ENCODE measurements at regions of chr5 and their contacts with region 1.

Region 1: DNA sequence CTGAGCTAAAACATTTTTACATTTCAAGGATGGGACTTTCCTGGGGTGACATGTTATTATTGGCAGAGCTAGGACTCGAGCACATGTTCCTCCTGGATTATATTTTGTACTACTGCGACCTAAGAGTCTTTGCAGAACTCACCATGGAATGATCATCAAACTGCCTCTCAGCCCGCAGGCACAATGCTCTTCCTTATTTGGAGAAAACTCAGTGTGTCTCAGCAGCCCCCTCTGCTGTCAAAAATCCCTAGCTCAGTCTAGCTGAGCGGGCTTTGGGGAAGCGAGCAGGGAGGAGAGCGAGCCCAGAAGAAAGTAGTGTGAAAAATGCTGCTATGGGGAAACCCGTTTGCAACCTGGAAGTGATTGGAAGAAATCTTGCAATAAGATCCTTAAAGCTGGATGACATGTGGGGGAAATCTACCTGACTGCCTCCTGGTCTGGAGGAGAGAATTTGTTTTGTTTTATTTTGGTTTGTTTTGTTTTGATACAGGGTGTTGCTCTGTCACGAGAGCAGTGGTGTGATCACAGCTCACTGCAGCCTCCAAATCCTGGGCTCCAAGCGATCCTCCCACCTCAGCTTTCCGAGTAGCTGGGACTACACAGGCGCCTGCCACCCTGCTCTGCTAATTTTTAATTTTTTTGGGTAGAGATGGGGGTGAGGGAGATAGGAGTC is 89.9 kb upstream of the CLINT1 start:
- DNase-seq: peak; percentile 60
- ATAC-seq: peak; percentile 100
- H3K4me3 Mint-ChIP-seq: no peak overlapping the region
- H3K27ac Mint-ChIP-seq: no peak overlapping the region
- H3K4me1 Mint-ChIP-seq: peaks cover 6% of the 10 kb centered on the region
- H3K27me3 Mint-ChIP-seq: peaks cover 5% of the 10 kb centered on the region
- CTCF ChIP-seq: no peak

Region 2: DNA sequence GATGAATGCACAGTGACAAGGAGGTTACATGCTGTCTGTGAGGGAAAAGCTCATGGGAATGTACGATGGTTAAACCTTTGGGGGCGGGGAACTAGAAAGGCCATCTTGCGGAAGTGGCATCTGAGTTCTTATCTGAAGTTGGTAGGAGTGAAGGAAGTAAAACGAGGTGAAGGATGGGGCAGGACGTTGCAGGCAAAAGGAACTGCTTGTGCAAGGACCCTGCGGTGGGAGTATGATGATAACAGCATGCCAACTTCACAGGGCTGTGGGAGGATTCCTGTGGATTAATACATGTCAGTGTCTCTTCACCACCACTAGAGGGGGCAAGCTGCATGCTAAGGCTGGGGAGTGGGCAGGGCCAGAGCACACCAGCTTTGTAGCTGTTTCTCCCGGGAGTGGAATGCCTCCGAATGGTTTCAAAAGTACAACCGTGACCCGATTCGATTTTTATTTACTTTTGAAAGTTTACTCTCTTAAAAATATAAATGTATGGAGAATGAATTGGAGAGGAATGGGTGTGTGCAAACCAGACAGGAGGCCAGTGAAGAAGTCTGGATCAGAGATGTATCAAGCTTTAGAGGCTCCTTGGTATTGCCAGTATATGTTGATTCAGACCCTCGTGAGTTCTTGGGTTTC is 620.5 kb before region 1 on chr5:
- CTCF ChIA-PET with region 1: no interaction called
- POLR2A ChIA-PET with region 1: no interaction called
- intact Hi-C with region 1: no loop called
- DNase-seq: no peak
- ATAC-seq: peak; percentile 100
- H3K4me3 Mint-ChIP-seq: no peak overlapping the region
- H3K27ac Mint-ChIP-seq: peak overlapping the region; percentile 36
- H3K4me1 Mint-ChIP-seq: peaks cover 6% of the 10 kb centered on the region
- H3K27me3 Mint-ChIP-seq: no peaks in the 10 kb centered on the region
- CTCF ChIP-seq: peak; percentile 59

Region 3: GRCh38 chr5:157415838-157416237 is 533.0 kb before region 1 on chr5:
- CTCF ChIA-PET with region 1: no interaction called
- POLR2A ChIA-PET with region 1: no interaction called
- intact Hi-C with region 1: no loop called
- DNase-seq: no peak
- ATAC-seq: no peak
- H3K4me3 Mint-ChIP-seq: no peak overlapping the region
- H3K27ac Mint-ChIP-seq: no peak overlapping the region
- H3K4me1 Mint-ChIP-seq: peaks cover 2% of the 10 kb centered on the region
- H3K27me3 Mint-ChIP-seq: no peaks in the 10 kb centered on the region
- CTCF ChIP-seq: no peak

Region 4: GRCh38 chr5:157449011-157449723 is 499.7 kb before region 1 on chr5:
- CTCF ChIA-PET with region 1: no interaction called
- POLR2A ChIA-PET with region 1: no interaction called
- intact Hi-C with region 1: no loop called
- DNase-seq: no peak
- ATAC-seq: no peak
- H3K4me3 Mint-ChIP-seq: no peak overlapping the region
- H3K27ac Mint-ChIP-seq: no peak overlapping the region
- H3K4me1 Mint-ChIP-seq: peaks cover 7% of the 10 kb centered on the region
- H3K27me3 Mint-ChIP-seq: no peaks in the 10 kb centered on the region
- CTCF ChIP-seq: no peak

Region 5: DNA sequence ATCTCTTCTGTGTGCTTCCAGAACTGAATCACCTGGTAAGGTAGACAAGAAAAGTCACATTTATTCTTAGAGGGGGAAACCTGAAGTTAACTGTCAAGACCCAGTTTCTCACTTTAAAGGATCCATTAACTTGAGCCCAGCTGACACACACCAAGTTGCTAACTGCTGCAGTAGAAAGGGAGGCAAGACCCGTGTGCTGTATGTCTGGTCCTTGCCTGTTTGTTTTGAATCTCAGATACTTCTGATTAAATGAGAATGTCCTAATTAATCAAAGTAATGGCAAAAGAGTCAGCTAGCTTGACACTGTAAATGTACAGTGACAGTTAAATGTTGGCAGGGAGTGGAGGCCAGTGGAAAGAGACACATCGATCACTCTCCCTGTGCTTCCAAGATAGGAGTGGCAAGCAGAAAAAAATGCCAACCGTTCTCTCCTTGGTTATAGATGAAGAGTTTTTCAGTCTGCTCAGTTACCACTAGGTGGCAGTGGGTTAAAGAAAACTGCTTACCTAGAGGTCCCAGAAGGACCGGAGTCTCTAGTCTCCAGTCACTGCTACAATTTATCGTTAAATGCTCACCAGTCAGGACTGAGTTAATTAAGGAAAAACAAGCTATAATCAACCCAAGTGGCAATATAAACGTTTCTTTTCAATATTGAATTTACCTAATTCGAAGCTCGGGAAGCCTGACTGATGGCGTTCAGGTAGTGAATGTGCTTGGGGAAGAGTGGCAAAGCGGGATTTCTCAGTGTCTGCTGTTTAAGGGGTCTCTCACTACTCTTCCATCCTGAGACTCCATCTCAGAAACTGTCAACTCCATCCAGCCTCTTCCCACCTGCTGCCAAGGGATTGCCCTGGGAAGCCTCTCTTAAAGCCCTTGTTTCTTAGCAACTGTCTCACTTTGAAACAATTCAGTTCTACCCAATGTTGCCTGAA is 186.9 kb before region 1 on chr5:
- CTCF ChIA-PET with region 1: interaction called, 3 read pairs
- POLR2A ChIA-PET with region 1: no interaction called
- intact Hi-C with region 1: loop called (anchors 1 kb)
- DNase-seq: no peak
- ATAC-seq: peak; percentile 87
- H3K4me3 Mint-ChIP-seq: no peak overlapping the region
- H3K27ac Mint-ChIP-seq: no peak overlapping the region
- H3K4me1 Mint-ChIP-seq: no peaks in the 10 kb centered on the region
- H3K27me3 Mint-ChIP-seq: no peaks in the 10 kb centered on the region
- CTCF ChIP-seq: peak; percentile 17

Region 6: DNA sequence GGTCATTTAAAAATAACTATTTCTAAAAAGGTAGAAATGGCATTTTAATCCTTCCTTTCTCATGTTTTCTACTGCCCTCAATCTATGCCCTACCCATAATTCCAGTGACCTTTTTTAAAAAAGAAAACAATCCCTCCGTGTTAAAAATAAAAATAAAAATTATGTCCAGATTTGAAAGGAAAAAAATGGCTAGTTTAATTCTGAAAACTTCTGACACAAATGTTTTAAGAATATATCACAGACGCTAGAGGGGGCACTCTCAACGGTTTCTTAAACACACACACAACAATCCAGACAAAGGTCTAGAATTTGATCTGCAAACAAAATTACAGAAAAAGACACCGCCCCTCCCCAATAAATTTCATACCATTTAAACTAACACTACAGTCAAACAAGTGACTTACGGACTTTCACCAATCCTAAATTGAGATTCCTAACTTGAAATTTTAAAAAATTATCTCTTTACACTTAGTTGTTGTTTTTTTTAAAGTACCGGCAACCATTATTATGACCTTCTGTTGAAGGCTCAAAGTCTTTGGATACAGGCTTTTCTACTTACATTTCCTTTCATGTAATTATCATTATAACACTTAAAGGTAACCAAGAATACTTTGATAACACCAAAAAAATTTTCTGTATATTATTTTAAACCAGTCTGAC is 128.2 kb before region 1 on chr5:
- CTCF ChIA-PET with region 1: interaction called, 81 read pairs
- POLR2A ChIA-PET with region 1: no interaction called
- intact Hi-C with region 1: loop called (anchors 1 kb)
- DNase-seq: no peak
- ATAC-seq: no peak
- H3K4me3 Mint-ChIP-seq: no peak overlapping the region
- H3K27ac Mint-ChIP-seq: peak overlapping the region; percentile 12
- H3K4me1 Mint-ChIP-seq: peaks cover 25% of the 10 kb centered on the region
- H3K27me3 Mint-ChIP-seq: no peaks in the 10 kb centered on the region
- CTCF ChIP-seq: no peak

Region 7: DNA sequence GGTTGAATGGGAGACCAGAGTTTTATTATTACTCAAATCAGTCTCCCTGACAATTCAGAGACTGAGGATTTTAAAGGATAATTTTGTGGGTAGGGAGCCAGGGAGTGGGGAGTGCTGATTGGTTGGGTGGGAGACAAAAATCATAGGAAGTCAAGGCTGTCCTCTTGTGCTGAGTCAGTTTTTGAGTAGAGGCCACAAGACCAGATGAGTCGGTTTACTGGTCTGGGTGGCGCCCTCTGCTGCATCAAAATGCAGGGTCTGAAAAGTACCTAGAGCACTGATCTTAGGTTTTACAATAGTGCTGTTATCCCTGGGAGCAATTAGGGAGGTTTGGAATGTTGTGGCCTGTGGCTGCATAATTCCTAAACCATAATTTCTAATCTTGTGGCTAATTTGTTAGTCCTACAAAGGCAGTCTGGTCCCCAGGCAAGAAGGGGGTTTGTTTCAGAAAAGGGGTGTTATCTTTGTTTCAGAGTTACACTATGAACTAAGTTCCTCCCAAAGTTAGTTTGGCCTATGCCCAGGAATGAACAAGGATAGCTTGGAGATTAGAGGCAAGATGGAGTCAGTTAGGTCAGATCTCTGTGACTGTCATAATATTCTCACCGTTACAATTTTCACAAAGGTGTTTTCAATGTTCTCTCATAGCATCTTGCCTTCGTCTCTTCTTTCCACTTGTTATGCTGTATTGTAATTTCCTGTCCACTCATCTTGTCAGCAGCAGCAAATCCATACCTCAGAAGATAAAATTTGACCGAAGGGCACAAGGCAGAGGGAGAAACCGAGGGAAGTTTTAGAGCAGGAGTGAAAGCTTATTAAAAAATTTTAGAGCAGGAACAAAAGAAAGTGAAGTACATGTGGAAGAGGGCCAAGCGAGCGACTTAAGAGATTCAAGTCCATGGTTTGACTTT is 30.7 kb before region 1 on chr5:
- CTCF ChIA-PET with region 1: interaction called, 13 read pairs
- POLR2A ChIA-PET with region 1: no interaction called
- intact Hi-C with region 1: loop called (anchors 2 kb)
- DNase-seq: no peak
- ATAC-seq: no peak
- H3K4me3 Mint-ChIP-seq: no peak overlapping the region
- H3K27ac Mint-ChIP-seq: peak overlapping the region; percentile 89
- H3K4me1 Mint-ChIP-seq: peaks cover 34% of the 10 kb centered on the region
- H3K27me3 Mint-ChIP-seq: no peaks in the 10 kb centered on the region
- CTCF ChIP-seq: no peak

Region 8: GRCh38 chr5:159133041-159133741 is 1184.3 kb after region 1 on chr5:
- CTCF ChIA-PET with region 1: interaction called, 9 read pairs
- POLR2A ChIA-PET with region 1: no interaction called
- intact Hi-C with region 1: loop called (anchors 1 kb)
- DNase-seq: no peak
- ATAC-seq: peak; percentile 50
- H3K4me3 Mint-ChIP-seq: no peak overlapping the region
- H3K27ac Mint-ChIP-seq: no peak overlapping the region
- H3K4me1 Mint-ChIP-seq: no peaks in the 10 kb centered on the region
- H3K27me3 Mint-ChIP-seq: no peaks in the 10 kb centered on the region
- CTCF ChIP-seq: peak; percentile 82